ENCODE measurements at regions of chr11 and their contacts with region 1.

Region 1: GRCh38 chr11:63813035-63813562 is at the start of gene SPINDOC:
- DNase-seq: peak; percentile 74
- H3K4me3 Mint-ChIP-seq: peak within 1 kb of the TSS; percentile 85
- H3K27ac Mint-ChIP-seq: peak within 1 kb of the TSS; percentile 60
- H3K4me1 Mint-ChIP-seq: peaks cover 18% of the 10 kb centered on the region
- H3K27me3 Mint-ChIP-seq: no peaks in the 10 kb centered on the region
- total RNA-seq, gene SPINDOC: 67.0 and 69.2 TPM in 2 replicates

Region 2: GRCh38 chr11:63592975-63593395 is 220.1 kb before region 1 on chr11:
- intact Hi-C with region 1: no loop called
- DNase-seq: no peak
- H3K4me3 Mint-ChIP-seq: no peak overlapping the region
- H3K27ac Mint-ChIP-seq: no peak overlapping the region
- H3K4me1 Mint-ChIP-seq: no peaks in the 10 kb centered on the region
- H3K27me3 Mint-ChIP-seq: peaks cover 4% of the 10 kb centered on the region

Region 3: GRCh38 chr11:63768237-63769043 is 44.7 kb before region 1 on chr11 and contains the start of gene ZFTA:
- intact Hi-C with region 1: loop called (anchors 5 kb)
- DNase-seq: peak; percentile 43
- H3K4me3 Mint-ChIP-seq: peak within 1 kb of the TSS; percentile 86
- H3K27ac Mint-ChIP-seq: peak within 1 kb of the TSS; percentile 24
- H3K4me1 Mint-ChIP-seq: peaks cover 12% of the 10 kb centered on the region
- H3K27me3 Mint-ChIP-seq: peaks cover 29% of the 10 kb centered on the region
- total RNA-seq, gene ZFTA: 7.0 and 8.9 TPM in 2 replicates

Measured in activated T-helper 2 cell treated with anti-CD3 and anti-CD28 coated beads, Interferon-gamma antibody, Interleukin-2, Interleukin-4, amounts not matched to agents 10 μg/mL and 5 μg/mL and 100 μg/mL, durations not matched to agents 14 hours and 24 hours and 36 hours (primary cell).